SK-N-SH (cell line): ENCODE measurements at regions of chr1 and their contacts with region 1.

Region 1: DNA sequence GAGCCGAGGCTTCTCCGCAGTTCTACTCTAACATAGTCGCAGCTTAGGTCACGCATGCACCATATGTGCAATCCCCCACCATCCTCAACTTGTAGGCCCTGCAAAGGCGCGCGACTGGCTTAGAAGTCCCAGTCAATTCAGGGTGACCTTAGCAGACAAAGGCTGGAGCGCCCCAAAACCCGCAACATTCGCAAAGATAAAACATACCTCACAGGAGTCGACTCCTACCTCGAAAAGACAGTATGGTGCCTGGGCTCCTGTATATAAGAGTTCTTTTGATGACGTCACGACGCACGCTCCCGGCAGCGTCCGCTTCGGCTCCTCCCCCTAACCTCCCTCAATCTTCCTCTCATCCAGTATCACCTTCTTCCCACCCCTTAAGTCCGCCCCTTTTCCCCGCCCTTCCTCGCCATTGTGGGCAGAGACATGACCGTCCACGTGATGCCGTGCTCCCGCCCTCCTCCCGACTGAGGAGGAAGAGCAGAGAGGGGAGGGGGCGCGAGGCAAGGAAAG is at the start of gene GAS5:
- DNase-seq: no peak
- H3K4me3 ChIP-seq: peak within 1 kb of the TSS; percentile 82 to 90
- H3K27ac ChIP-seq: peak within 1 kb of the TSS; percentile 74 to 97
- H3K4me1 ChIP-seq: peaks cover 11 to 38% of the 10 kb centered on the region in 2 experiments; a peak in 3 of 4 replicates
- H3K27me3 ChIP-seq: no peaks in the 10 kb centered on the region
- CTCF ChIP-seq: no peak
- EP300 ChIP-seq: no peak
- RAD21 ChIP-seq: no peak
- polyA plus RNA-seq, gene GAS5: 961 and 1,422 TPM in 2 replicates

Region 2: DNA sequence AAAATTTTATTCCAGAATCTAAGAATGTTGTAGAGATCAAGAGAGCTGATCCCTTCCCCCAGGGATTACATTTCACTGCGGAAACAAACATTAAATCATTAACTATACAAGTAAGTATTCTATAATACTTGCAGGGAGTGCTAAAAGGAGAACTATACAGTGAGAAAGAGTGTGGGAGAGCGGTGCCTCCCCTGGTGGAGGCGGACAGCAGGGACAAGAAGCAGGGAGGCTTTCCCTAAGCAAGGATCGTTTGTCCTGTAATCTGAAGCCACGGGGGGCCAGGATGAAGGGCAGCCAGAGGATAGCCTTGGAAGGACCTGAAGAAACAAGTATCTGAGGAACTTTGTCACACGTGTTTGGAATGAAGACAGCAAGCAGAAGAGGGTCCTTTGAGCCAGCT is 305.0 kb before region 1 on chr1:
- CTCF ChIA-PET with region 1: no interaction called
- POLR2A ChIA-PET with region 1: no interaction called
- DNase-seq: no peak
- H3K4me3 ChIP-seq: no peak overlapping the region
- H3K27ac ChIP-seq: no peak overlapping the region
- H3K4me1 ChIP-seq: no peaks in the 10 kb centered on the region
- H3K27me3 ChIP-seq: no peaks in the 10 kb centered on the region
- CTCF ChIP-seq: peak; percentile 13; the same call in 1 of the 2 replicates
- EP300 ChIP-seq: no peak
- RAD21 ChIP-seq: no peak

Region 3: GRCh38 chr1:174000371-174000770 is 132.6 kb after region 1 on chr1:
- CTCF ChIA-PET with region 1: no interaction called
- POLR2A ChIA-PET with region 1: interaction called, 13 read pairs
- DNase-seq: peak; percentile 70
- H3K4me3 ChIP-seq: no peak overlapping the region
- H3K27ac ChIP-seq: peak overlapping the region; percentile 84 to 85
- H3K4me1 ChIP-seq: peaks cover 10 to 36% of the 10 kb centered on the region in 2 experiments; a peak in 3 of 4 replicates
- H3K27me3 ChIP-seq: no peaks in the 10 kb centered on the region
- CTCF ChIP-seq: no peak
- EP300 ChIP-seq: peak in 1 of 2 experiments; percentile 76; a peak in 1 of 4 replicates
- RAD21 ChIP-seq: peak; percentile 10; the same call in 1 of the 2 replicates